ENCODE measurements at regions of chr18 and their contacts with region 1.

Region 1: GRCh38 chr18:31977270-31977872 is 34.4 kb upstream of the TRAPPC8 start:
- DNase-seq: no peak

Region 2: GRCh38 chr18:31835528-31836133 is 141.7 kb before region 1 on chr18:
- intact Hi-C with region 1: loop called (anchors 10 kb)
- DNase-seq: no peak

Measured in cardiac septum (tissue), 1 donor.